ENCODE measurements at regions of chr14 and their contacts with region 1.

Region 1: GRCh38 chr14:99266181-99267178 is 5.5 kb downstream of the BCL11B start:
- DNase-seq: peak; percentile 83 to 94 (median 90)
- ATAC-seq: peak; percentile 22
- H3K4me3 ChIP-seq: peak overlapping the region; percentile 97
- H3K4me3 Mint-ChIP-seq: peak overlapping the region; percentile 100
- H3K27ac ChIP-seq: peak overlapping the region; percentile 95 to 97
- H3K27ac Mint-ChIP-seq: peak overlapping the region; percentile 99
- H3K4me1 ChIP-seq: peaks cover 53% of the 10 kb centered on the region
- H3K4me1 Mint-ChIP-seq: peaks cover 63% of the 10 kb centered on the region
- H3K27me3 ChIP-seq: no peaks in the 10 kb centered on the region
- H3K27me3 Mint-ChIP-seq: peaks cover 5% of the 10 kb centered on the region
- CTCF ChIP-seq: peak; percentile 99

Region 2: DNA sequence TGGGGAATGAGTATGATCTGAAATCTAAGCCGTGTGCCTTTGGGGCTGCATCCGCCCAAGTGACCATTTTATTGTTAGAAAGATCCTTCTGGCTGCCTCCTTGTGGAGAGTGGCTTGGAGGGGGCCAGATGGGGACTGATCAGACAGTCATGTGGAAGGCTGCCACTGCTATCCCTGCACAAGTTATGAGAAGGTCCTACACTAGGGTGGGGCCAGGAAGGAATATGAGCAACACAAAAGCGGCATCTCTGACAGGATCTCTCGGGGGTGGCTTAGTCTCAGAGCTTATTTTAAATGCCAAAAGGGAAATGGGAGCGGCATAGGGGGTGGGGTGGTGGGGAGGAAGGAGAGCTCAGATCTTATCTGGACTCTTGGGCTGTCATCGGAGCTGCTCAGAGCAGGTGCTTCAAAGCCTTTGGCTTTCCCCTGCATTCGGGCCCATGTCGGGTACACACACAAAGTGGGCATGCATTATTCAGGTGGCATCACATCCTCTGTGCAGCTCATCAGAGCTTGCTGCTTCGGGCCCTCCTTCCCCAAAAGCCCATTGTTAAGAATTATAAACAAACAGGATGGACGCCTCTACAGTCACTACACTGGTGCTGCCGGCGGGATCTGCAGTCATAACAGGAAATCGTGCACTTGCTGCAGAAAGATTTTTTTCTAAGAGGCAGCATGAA is 1663.9 kb before region 1 on chr14:
- CTCF ChIA-PET with region 1: interaction called, 3 read pairs
- POLR2A ChIA-PET with region 1: interaction called, 17 read pairs
- intact Hi-C with region 1: loop called (anchors 5 kb)
- DNase-seq: peak; percentile 66 to 93 (median 78)
- ATAC-seq: peak; percentile 88
- H3K4me3 ChIP-seq: peak overlapping the region; percentile 32
- H3K4me3 Mint-ChIP-seq: no peak overlapping the region
- H3K27ac ChIP-seq: peak overlapping the region; percentile 77 to 86
- H3K27ac Mint-ChIP-seq: no peak overlapping the region
- H3K4me1 ChIP-seq: peaks cover 52% of the 10 kb centered on the region
- H3K4me1 Mint-ChIP-seq: no peaks in the 10 kb centered on the region
- H3K27me3 ChIP-seq: no peaks in the 10 kb centered on the region
- H3K27me3 Mint-ChIP-seq: no peaks in the 10 kb centered on the region
- CTCF ChIP-seq: no peak

Region 3: DNA sequence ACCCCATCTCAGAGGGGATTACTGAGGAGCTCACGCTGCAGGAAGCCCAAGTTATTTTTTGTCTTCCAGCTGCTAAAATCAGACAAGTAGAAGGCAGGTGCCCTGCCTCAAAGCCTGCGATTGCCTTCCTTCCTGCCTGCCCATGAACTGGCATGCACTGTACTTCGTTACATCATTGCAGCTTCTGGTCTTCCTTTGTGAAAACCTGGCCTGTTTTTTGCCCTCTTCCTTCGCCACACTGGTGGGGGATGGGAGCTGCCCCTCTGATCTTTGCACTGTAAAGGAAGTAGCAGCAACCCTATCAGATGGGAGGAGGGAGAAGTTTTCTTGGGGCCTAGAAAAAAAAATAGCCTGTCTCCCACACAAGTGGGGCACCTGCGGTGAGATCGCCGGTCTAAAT is 1093.2 kb before region 1 on chr14:
- CTCF ChIA-PET with region 1: interaction called, 8 read pairs
- POLR2A ChIA-PET with region 1: interaction called, 40 read pairs
- intact Hi-C with region 1: no loop called
- DNase-seq: peak; percentile 34 to 94 (median 74)
- ATAC-seq: peak; percentile 70
- H3K4me3 ChIP-seq: peak overlapping the region; percentile 33
- H3K4me3 Mint-ChIP-seq: peak overlapping the region; percentile 83
- H3K27ac ChIP-seq: peak overlapping the region; percentile 78 to 80
- H3K27ac Mint-ChIP-seq: peak overlapping the region; percentile 93
- H3K4me1 ChIP-seq: peaks cover 92% of the 10 kb centered on the region
- H3K4me1 Mint-ChIP-seq: peaks cover 100% of the 10 kb centered on the region
- H3K27me3 ChIP-seq: no peaks in the 10 kb centered on the region
- H3K27me3 Mint-ChIP-seq: no peaks in the 10 kb centered on the region
- CTCF ChIP-seq: no peak

Region 4: GRCh38 chr14:98227000-98227726 is 1039.3 kb before region 1 on chr14:
- CTCF ChIA-PET with region 1: interaction called, 4 read pairs
- POLR2A ChIA-PET with region 1: interaction called, 10 read pairs
- intact Hi-C with region 1: loop called (anchors 5 to 10 kb)
- DNase-seq: peak in 5 of 14 experiments; percentile 13 to 56 (median 48)
- ATAC-seq: no peak
- H3K4me3 ChIP-seq: no peak overlapping the region
- H3K4me3 Mint-ChIP-seq: peak overlapping the region; percentile 61
- H3K27ac ChIP-seq: peak overlapping the region; percentile 65
- H3K27ac Mint-ChIP-seq: peak overlapping the region; percentile 96
- H3K4me1 ChIP-seq: peaks cover 84% of the 10 kb centered on the region
- H3K4me1 Mint-ChIP-seq: peaks cover 94% of the 10 kb centered on the region
- H3K27me3 ChIP-seq: no peaks in the 10 kb centered on the region
- H3K27me3 Mint-ChIP-seq: no peaks in the 10 kb centered on the region
- CTCF ChIP-seq: no peak

Region 5: DNA sequence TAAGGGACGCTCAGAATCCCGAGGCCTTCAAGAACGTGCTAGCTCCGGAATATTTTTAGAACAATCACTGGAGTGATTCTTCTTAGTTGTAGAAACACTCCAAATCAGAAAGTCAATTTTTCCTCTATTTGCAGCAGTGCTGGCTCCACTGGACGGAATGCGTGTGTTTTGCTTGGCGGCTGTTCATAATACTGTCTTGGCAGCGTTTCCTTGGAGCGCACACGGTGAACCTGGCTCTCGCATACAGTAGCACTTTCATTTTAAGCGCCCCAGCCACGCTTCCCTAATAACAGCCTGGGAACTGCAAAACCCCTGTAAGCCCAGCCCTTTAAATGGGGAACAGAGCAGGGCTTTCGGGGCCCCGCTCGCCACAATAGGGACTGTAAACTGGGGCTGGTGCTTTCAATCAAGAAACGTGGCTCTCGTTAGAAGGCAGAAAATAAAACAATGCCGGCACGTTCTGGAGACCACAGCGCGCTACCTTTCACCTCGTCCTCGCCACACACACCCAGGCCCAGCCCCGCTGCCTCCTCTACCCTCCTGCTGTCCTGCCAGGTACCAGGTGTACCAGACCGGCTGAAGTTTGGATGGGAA is 74.4 kb before region 1 on chr14:
- CTCF ChIA-PET with region 1: interaction called, 49 read pairs
- POLR2A ChIA-PET with region 1: interaction called, 4,389 read pairs
- intact Hi-C with region 1: loop called (anchors 2 kb)
- DNase-seq: peak in 5 of 14 experiments; percentile 40 to 72 (median 64)
- ATAC-seq: peak; percentile 40
- H3K4me3 ChIP-seq: peak overlapping the region; percentile 59
- H3K4me3 Mint-ChIP-seq: peak overlapping the region; percentile 89
- H3K27ac ChIP-seq: peak overlapping the region; percentile 77 to 81
- H3K27ac Mint-ChIP-seq: peak overlapping the region; percentile 95
- H3K4me1 ChIP-seq: peaks cover 99% of the 10 kb centered on the region
- H3K4me1 Mint-ChIP-seq: peaks cover 97% of the 10 kb centered on the region
- H3K27me3 ChIP-seq: no peaks in the 10 kb centered on the region
- H3K27me3 Mint-ChIP-seq: no peaks in the 10 kb centered on the region
- CTCF ChIP-seq: no peak

Region 6: GRCh38 chr14:99241325-99242010 is 25.0 kb before region 1 on chr14:
- CTCF ChIA-PET with region 1: interaction called, 179 read pairs
- POLR2A ChIA-PET with region 1: interaction called, 4,389 read pairs
- intact Hi-C with region 1: loop called (anchors 1 kb)
- DNase-seq: peak in 9 of 14 experiments; percentile 49 to 82 (median 66)
- ATAC-seq: peak; percentile 38
- H3K4me3 ChIP-seq: peak overlapping the region; percentile 42
- H3K4me3 Mint-ChIP-seq: peak overlapping the region; percentile 94
- H3K27ac ChIP-seq: peak overlapping the region; percentile 95 to 97
- H3K27ac Mint-ChIP-seq: peak overlapping the region; percentile 95
- H3K4me1 ChIP-seq: peaks cover 89% of the 10 kb centered on the region
- H3K4me1 Mint-ChIP-seq: peaks cover 88% of the 10 kb centered on the region
- H3K27me3 ChIP-seq: no peaks in the 10 kb centered on the region
- H3K27me3 Mint-ChIP-seq: no peaks in the 10 kb centered on the region
- CTCF ChIP-seq: no peak

Region 7: GRCh38 chr14:99344051-99344758 is 77.7 kb after region 1 on chr14:
- CTCF ChIA-PET with region 1: no interaction called
- POLR2A ChIA-PET with region 1: no interaction called
- intact Hi-C with region 1: no loop called
- DNase-seq: no peak
- ATAC-seq: no peak
- H3K4me3 ChIP-seq: no peak overlapping the region
- H3K4me3 Mint-ChIP-seq: no peak overlapping the region
- H3K27ac ChIP-seq: no peak overlapping the region
- H3K27ac Mint-ChIP-seq: no peak overlapping the region
- H3K4me1 ChIP-seq: no peaks in the 10 kb centered on the region
- H3K4me1 Mint-ChIP-seq: no peaks in the 10 kb centered on the region
- H3K27me3 ChIP-seq: peaks cover 0 to 15% of the 10 kb centered on the region in 2 experiments
- H3K27me3 Mint-ChIP-seq: peaks cover 24% of the 10 kb centered on the region
- CTCF ChIP-seq: no peak